CD8-positive, alpha-beta T cell (primary cell): ENCODE measurements at regions of chr2 and their contacts with region 1.

Region 1: GRCh38 chr2:30472326-30472725 is 25.3 kb downstream of the LCLAT1 start:
- DNase-seq: no peak
- ATAC-seq: no peak
- H3K4me3 ChIP-seq: no peak overlapping the region
- H3K4me3 Mint-ChIP-seq: no peak overlapping the region
- H3K27ac ChIP-seq: no peak overlapping the region
- H3K27ac Mint-ChIP-seq: no peak overlapping the region
- H3K4me1 ChIP-seq: peaks cover 14% of the 10 kb centered on the region
- H3K4me1 Mint-ChIP-seq: peaks cover 49% of the 10 kb centered on the region
- H3K27me3 ChIP-seq: no peaks in the 10 kb centered on the region
- H3K27me3 Mint-ChIP-seq: no peaks in the 10 kb centered on the region
- CTCF ChIP-seq: no peak

Region 2: GRCh38 chr2:29923110-29923721 is 549.1 kb before region 1 on chr2:
- CTCF ChIA-PET with region 1: no interaction called
- POLR2A ChIA-PET with region 1: no interaction called
- intact Hi-C with region 1: loop called in 1 of 2 experiments (anchors 5 kb)
- DNase-seq: peak in 8 of 9 experiments; percentile 11 to 59 (median 39)
- ATAC-seq: no peak
- H3K4me3 ChIP-seq: no peak overlapping the region
- H3K4me3 Mint-ChIP-seq: no peak overlapping the region
- H3K27ac ChIP-seq: no peak overlapping the region
- H3K27ac Mint-ChIP-seq: no peak overlapping the region
- H3K4me1 ChIP-seq: peaks cover 6% of the 10 kb centered on the region
- H3K4me1 Mint-ChIP-seq: peaks cover 23% of the 10 kb centered on the region
- H3K27me3 ChIP-seq: peaks cover 15 to 20% of the 10 kb centered on the region in 2 experiments
- H3K27me3 Mint-ChIP-seq: peaks cover 56% of the 10 kb centered on the region
- CTCF ChIP-seq: peak; percentile 96

Region 3: DNA sequence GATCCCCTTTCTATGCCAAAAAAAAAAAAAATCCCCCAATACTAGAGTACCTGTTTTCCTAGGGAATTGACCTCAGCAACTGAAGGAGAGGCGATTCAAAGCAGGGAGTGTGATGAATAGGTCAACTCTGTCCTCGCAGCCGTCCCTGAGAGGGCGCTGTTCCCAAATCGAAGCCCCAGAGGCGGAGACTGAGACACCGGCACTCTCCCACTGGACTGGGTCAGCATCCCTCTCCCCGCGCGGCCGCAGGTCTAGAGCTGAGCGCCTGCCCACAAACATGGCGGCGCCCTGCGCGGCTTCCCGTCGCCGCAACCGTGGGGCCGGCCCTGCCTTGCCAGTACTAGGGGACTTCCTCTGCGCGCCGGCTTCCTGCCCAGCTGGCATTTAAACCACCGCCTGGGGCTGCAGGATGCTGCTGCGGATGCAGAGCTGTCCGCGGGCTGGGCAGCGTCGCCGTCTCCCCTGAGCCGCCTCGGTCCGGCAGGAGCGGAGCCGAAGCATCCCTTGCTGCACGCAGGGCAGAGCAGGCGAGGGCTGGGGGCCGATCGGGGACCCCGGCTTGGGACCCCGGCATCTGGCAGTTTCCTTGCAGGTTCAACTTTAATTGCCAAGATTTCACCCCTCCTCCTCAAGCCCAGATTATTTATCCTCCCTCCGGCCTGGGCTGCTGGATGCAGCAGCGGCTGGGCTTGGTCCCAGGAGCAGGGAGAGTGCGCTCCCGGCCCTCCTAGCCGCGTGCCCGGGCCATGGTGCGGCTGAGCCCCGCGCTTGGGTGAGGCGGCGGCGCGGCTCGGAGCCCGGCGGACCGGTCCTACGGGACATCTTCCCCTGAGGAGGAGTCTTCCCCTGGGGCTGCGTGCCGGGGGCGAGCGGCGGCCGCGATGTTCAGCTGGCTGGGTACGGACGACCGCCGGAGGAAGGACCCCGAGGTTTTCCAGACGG is 761.7 kb after region 1 on chr2 and contains the start of gene EHD3:
- CTCF ChIA-PET with region 1: no interaction called
- POLR2A ChIA-PET with region 1: no interaction called
- intact Hi-C with region 1: loop called in 1 of 2 experiments (anchors 5 kb)
- DNase-seq: peak; percentile 46 to 88 (median 73)
- ATAC-seq: peak; percentile 96
- H3K4me3 ChIP-seq: peak within 1 kb of the TSS; percentile 67
- H3K4me3 Mint-ChIP-seq: peak within 1 kb of the TSS; percentile 79
- H3K27ac ChIP-seq: no peak within 1 kb of the TSS
- H3K27ac Mint-ChIP-seq: no peak within 1 kb of the TSS
- H3K4me1 ChIP-seq: peaks cover 16% of the 10 kb centered on the region
- H3K4me1 Mint-ChIP-seq: peaks cover 26% of the 10 kb centered on the region
- H3K27me3 ChIP-seq: no peaks in the 10 kb centered on the region
- H3K27me3 Mint-ChIP-seq: no peaks in the 10 kb centered on the region
- CTCF ChIP-seq: no peak
- total RNA-seq, gene EHD3: 0.81 to 0.95 TPM